A549 (cell line): ENCODE measurements at regions of chr9 and their contacts with region 1.

Region 1: DNA sequence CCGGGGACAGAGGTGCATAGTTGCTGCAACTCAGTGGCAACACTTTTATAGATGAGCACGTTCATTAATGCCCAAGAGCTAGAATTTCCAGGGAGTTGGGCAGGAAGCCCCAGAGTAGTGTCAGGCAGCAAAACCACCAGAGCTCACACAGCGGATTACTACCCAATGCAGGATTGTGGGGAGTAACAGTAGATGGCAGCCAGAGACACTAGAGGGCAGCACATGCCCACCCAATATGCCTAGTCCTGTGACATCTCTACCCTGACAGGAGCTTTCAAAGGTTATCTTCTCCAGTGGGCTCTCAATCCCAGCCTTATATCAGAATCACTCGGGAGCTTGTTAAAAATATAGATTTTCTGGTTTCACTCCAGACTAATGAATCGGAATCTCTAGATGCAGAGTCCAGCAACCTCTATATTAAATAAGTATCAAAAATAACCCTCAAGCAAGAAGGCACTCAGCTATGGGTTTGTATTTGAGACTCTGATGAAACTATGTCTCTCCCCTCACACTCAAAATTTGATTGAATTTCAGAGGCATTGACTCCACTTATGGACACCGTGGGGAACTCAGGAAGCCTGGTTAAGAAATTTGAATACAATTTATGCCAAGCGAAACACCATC is 58.4 kb upstream of the PHF24 start:
- DNase-seq: peak; percentile 73 to 75
- ATAC-seq: peak; percentile 99 to 100
- H3K4me3 ChIP-seq: no peak overlapping the region
- H3K27ac ChIP-seq: no peak overlapping the region
- H3K4me1 ChIP-seq: no peaks in the 10 kb centered on the region
- CTCF ChIP-seq: peak; percentile 89
- EP300 ChIP-seq: no peak
- POLR2A ChIP-seq: no peak
- RAD21 ChIP-seq: peak; percentile 90 to 93

Region 2: GRCh38 chr9:34759432-34760134 is 140.1 kb before region 1 on chr9:
- CTCF ChIA-PET with region 1: interaction called, 16 read pairs
- POLR2A ChIA-PET with region 1: no interaction called
- DNase-seq: no peak
- ATAC-seq: peak; percentile 47 to 55; a peak in 3 of 6 replicates
- H3K4me3 ChIP-seq: no peak overlapping the region
- H3K27ac ChIP-seq: no peak overlapping the region
- H3K4me1 ChIP-seq: no peaks in the 10 kb centered on the region
- CTCF ChIP-seq: no peak
- EP300 ChIP-seq: no peak
- POLR2A ChIP-seq: no peak
- RAD21 ChIP-seq: no peak

Region 3: GRCh38 chr9:34948451-34948850 is 48.8 kb after region 1 on chr9:
- CTCF ChIA-PET with region 1: interaction called, 20 read pairs
- POLR2A ChIA-PET with region 1: no interaction called
- DNase-seq: no peak
- ATAC-seq: no peak
- H3K4me3 ChIP-seq: no peak overlapping the region
- H3K27ac ChIP-seq: no peak overlapping the region
- H3K4me1 ChIP-seq: no peaks in the 10 kb centered on the region
- CTCF ChIP-seq: no peak
- EP300 ChIP-seq: no peak
- POLR2A ChIP-seq: no peak
- RAD21 ChIP-seq: no peak

Region 4: GRCh38 chr9:34974664-34975063 is 75.0 kb after region 1 on chr9:
- CTCF ChIA-PET with region 1: interaction called, 22 read pairs
- POLR2A ChIA-PET with region 1: no interaction called
- DNase-seq: no peak
- ATAC-seq: no peak
- H3K4me3 ChIP-seq: no peak overlapping the region
- H3K27ac ChIP-seq: no peak overlapping the region
- H3K4me1 ChIP-seq: no peaks in the 10 kb centered on the region
- CTCF ChIP-seq: no peak
- EP300 ChIP-seq: no peak
- POLR2A ChIP-seq: no peak
- RAD21 ChIP-seq: no peak

Region 5: GRCh38 chr9:34994260-34994899 is 94.7 kb after region 1 on chr9:
- CTCF ChIA-PET with region 1: interaction called, 132 read pairs
- POLR2A ChIA-PET with region 1: interaction called, 4 read pairs
- DNase-seq: peak; percentile 58 to 78
- ATAC-seq: peak; percentile 49 to 64; a peak in 5 of 6 replicates
- H3K4me3 ChIP-seq: no peak overlapping the region
- H3K27ac ChIP-seq: no peak overlapping the region; a peak in 1 of 6 replicates
- H3K4me1 ChIP-seq: peaks cover 39% of the 10 kb centered on the region
- CTCF ChIP-seq: peak; percentile 52
- EP300 ChIP-seq: no peak
- POLR2A ChIP-seq: no peak
- RAD21 ChIP-seq: peak; percentile 47 to 65; a peak in 4 of 5 replicates

Region 6: DNA sequence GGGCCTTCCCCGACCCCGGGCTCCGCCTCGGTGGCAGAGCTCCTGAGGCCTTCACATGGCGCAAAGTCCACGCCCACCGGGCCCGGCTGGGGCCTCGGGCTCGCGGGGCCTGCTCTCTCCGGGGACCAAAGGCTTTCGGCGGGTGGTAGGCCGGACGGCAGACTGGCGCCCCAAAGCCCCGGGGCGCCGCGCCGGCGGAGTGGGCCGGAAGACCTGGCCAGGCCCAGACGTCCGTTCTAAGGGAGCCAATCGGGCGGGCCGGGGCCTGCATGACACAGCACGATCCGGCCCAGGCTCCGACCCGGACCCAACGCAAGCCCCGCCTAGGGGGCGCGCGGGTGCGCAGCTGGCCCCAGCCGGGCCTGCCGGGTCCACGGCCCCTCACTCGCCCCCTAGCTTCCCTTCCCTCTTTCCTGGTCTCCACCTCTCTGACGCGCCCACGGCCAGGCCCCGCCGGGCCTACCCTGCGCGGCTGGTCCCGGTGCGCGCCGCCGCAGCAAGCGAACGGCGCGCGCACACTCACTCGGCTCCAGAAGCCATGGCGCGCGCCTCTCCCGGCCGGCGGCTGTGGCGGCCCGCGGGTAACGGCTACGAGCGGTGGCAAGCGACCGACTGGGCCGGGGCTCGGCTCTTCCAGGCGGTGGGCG is 172.3 kb after region 1 on chr9:
- CTCF ChIA-PET with region 1: interaction called, 16 read pairs
- POLR2A ChIA-PET with region 1: interaction called, 6 read pairs
- DNase-seq: peak; percentile 77 to 92
- ATAC-seq: peak; percentile 81 to 87
- H3K4me3 ChIP-seq: peak overlapping the region; percentile 92
- H3K27ac ChIP-seq: peak overlapping the region; percentile 97 to 98
- H3K4me1 ChIP-seq: peaks cover 28% of the 10 kb centered on the region
- CTCF ChIP-seq: peak; percentile 59
- EP300 ChIP-seq: no peak
- POLR2A ChIP-seq: no peak; the same call in 1 of the 2 replicates
- RAD21 ChIP-seq: no peak

Region 7: DNA sequence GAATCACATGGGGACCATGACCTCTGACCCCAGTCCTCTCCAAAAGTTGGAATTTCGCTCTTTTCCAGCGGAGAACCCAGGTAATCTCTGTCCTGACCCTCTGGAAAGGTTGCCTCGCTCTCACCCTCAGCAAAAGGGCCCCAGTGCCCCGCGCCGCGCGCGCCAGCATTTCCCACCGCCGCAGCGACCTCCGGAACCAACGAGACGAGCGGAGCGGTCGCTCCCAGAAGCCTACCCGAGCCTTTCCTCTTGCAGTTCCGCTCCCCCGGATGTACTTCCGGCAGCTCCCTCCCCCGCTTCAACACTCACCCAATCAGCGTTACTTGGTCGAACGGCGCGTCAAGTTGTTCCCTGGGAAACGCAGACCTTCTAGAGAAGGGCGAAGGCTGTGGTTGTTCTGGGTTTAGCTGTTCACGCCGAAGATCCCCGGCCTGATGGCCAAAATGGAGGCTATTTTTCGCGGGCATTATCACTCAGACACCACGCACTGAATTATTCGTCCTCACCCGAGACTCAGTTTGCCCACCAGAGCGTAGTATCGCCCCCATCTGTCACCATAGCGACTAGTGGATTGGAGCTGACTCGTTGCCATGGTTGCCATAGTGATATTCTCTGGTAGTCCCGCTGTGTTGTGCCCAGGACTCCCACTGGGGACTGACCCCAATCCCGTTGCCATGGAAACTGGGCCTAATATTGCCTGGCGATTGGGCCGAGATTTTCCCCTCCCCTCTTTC is 203.4 kb after region 1 on chr9 and contains the start of gene STOML2:
- CTCF ChIA-PET with region 1: interaction called, 38 read pairs
- POLR2A ChIA-PET with region 1: no interaction called
- DNase-seq: peak; percentile 97 to 98
- ATAC-seq: peak; percentile 97 to 98
- H3K4me3 ChIP-seq: peak within 1 kb of the TSS; percentile 70
- H3K27ac ChIP-seq: peak within 1 kb of the TSS; percentile 88 to 91
- H3K4me1 ChIP-seq: peaks cover 14% of the 10 kb centered on the region
- CTCF ChIP-seq: no peak
- EP300 ChIP-seq: no peak
- POLR2A ChIP-seq: peak; percentile 66
- RAD21 ChIP-seq: no peak
- polyA plus RNA-seq, gene STOML2: 196 and 230 TPM in 2 replicates

Region 8: GRCh38 chr9:35446012-35446411 is 546.4 kb after region 1 on chr9:
- CTCF ChIA-PET with region 1: no interaction called
- POLR2A ChIA-PET with region 1: no interaction called
- DNase-seq: no peak
- ATAC-seq: no peak
- H3K4me3 ChIP-seq: no peak overlapping the region
- H3K27ac ChIP-seq: no peak overlapping the region
- H3K4me1 ChIP-seq: peaks cover 10% of the 10 kb centered on the region; the same call in 2 of the 3 replicates
- CTCF ChIP-seq: no peak
- EP300 ChIP-seq: no peak
- POLR2A ChIP-seq: no peak
- RAD21 ChIP-seq: no peak